Activated naive CD4-positive, alpha-beta T cell treated with anti-CD3 and anti-CD28 coated beads, Interleukin-2, amount 10 ng/mL, durations not matched to agents 7 days and 5 days (primary cell): ENCODE measurements at regions of chrX and their contacts with region 1.

Region 1: GRCh38 chrX:19739683-19740082 is 147.7 kb downstream of the SH3KBP1 start:
- DNase-seq: peak; percentile 61
- H3K4me3 Mint-ChIP-seq: no peak overlapping the region
- H3K27ac Mint-ChIP-seq: no peak overlapping the region
- H3K4me1 Mint-ChIP-seq: peaks cover 67% of the 10 kb centered on the region
- H3K27me3 Mint-ChIP-seq: no peaks in the 10 kb centered on the region

Region 2: GRCh38 chrX:19709812-19710518 is 29.7 kb before region 1 on chrX:
- CTCF ChIA-PET with region 1: no interaction called
- DNase-seq: no peak
- H3K4me3 Mint-ChIP-seq: no peak overlapping the region
- H3K27ac Mint-ChIP-seq: no peak overlapping the region
- H3K4me1 Mint-ChIP-seq: peaks cover 30% of the 10 kb centered on the region
- H3K27me3 Mint-ChIP-seq: no peaks in the 10 kb centered on the region

Region 3: GRCh38 chrX:19765628-19766027 is 25.9 kb after region 1 on chrX:
- CTCF ChIA-PET with region 1: interaction called, 11 read pairs
- DNase-seq: no peak
- H3K4me3 Mint-ChIP-seq: no peak overlapping the region
- H3K27ac Mint-ChIP-seq: no peak overlapping the region
- H3K4me1 Mint-ChIP-seq: peaks cover 59% of the 10 kb centered on the region
- H3K27me3 Mint-ChIP-seq: no peaks in the 10 kb centered on the region